ENCODE measurements at regions of chr1 and their contacts with region 1.

Region 1: DNA sequence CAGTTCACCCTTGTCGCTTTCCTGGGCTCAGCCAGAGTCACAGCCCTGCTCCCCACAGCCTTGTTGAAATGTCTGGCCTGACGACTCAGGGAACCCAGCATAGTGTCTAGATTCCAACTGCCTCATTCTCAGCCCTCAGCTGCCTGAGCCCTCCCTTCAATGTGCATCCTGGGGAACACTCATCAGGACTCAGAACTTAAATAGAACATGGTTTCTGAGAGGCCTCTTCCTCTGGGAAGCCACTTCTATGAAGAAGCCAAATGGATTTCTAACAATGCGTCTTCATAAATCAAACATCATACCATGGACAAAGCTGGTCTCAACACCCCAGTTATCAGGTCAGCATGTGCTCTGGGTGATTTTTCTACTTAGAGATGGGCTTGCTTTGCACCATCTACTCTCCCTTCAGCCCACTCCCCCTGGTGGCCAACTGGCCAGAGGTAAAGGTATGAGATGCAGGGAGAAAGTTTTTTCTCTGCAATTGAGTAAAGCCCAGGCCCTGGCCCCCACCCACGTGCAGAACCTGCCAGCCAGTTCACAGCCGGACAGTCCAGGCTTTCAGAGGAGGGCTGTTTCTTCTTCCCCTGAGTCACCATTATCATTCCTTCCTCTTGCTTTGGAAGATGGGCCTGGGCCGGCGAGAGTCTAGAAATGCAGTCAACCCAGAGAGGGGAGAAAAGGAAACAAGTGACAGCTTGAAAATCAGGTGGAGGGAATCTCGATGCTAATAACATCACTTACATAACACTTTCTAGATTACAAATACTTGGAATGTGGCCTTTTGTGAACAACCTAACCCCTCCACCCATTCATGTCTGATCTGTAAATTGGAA is 32.1 kb downstream of the CD244 start:
- DNase-seq: peak; percentile 39 to 89
- H3K4me3 ChIP-seq: no peak overlapping the region
- CTCF ChIP-seq: no peak
- POLR2A ChIP-seq: no peak

Region 2: DNA sequence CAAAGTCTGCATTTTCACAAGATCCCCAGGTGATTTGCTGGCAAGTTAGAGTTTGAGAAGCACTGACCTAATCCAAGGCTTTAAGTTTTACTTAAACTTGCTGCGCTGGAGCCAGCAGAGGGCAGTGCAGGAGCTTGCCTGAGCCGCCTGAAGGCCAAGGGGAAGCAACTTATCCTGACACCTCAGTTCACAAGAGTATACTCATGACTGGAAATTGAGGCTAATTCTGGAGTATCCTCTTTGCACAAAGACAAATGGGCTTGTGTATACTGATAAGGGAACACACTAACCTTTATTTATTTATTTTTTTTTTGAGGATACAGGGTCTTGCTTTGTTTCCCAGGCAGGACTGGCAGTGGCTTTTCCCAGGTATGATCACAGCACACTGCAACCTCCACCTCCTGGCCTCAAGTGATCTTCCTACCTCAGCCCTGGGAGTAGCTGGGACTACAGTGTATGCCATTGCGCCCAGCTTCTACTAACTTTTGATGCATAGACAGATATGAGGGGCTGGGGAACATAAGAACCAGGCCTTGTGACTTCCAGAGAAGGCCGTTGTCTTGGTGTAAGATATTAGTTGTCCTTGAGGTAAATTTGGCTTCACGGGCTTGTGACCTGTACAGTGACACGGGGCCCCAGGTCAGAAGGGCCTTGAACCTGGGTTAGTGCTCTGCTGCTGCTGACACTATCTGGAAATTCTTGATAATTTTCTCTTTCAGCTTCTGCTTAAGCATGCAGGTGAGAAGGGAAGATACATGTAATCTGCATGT is 154.7 kb before region 1 on chr1:
- intact Hi-C with region 1: loop called (anchors 10 kb)
- DNase-seq: peak in 1 of 2 donors; percentile 42
- H3K4me3 ChIP-seq: no peak overlapping the region
- CTCF ChIP-seq: no peak
- POLR2A ChIP-seq: no peak

Region 3: GRCh38 chr1:160951443-160952128 is 121.0 kb after region 1 on chr1:
- intact Hi-C with region 1: loop called (anchors 10 kb)
- DNase-seq: peak; percentile 54 to 89
- H3K4me3 ChIP-seq: no peak overlapping the region
- CTCF ChIP-seq: no peak
- POLR2A ChIP-seq: no peak